Heart right ventricle (tissue), 16 donors: ENCODE measurements at regions of chr10 and their contacts with region 1.

Region 1: GRCh38 chr10:94362360-94363250 is at the start of gene NOC3L:
- DNase-seq: peak; percentile 93 to 96
- ATAC-seq: peak; percentile 99 to 100 (median 100)
- H3K4me3 ChIP-seq: peak within 1 kb of the TSS; percentile 39 to 84 (median 74)
- H3K27ac ChIP-seq: peak within 1 kb of the TSS in 9 of 10 donors; percentile 48 to 84 (median 72)
- H3K4me1 ChIP-seq: peaks cover 6 to 27% (median 15%) of the 10 kb centered on the region in 9 donors
- H3K27me3 ChIP-seq: peaks cover 0 to 4% (median 0%) of the 10 kb centered on the region in 7 donors
- CTCF ChIP-seq: peak; percentile 74 to 97 (median 92)
- total RNA-seq, gene NOC3L: 7.1 to 9.3 (median 8.0) TPM

Region 2: DNA sequence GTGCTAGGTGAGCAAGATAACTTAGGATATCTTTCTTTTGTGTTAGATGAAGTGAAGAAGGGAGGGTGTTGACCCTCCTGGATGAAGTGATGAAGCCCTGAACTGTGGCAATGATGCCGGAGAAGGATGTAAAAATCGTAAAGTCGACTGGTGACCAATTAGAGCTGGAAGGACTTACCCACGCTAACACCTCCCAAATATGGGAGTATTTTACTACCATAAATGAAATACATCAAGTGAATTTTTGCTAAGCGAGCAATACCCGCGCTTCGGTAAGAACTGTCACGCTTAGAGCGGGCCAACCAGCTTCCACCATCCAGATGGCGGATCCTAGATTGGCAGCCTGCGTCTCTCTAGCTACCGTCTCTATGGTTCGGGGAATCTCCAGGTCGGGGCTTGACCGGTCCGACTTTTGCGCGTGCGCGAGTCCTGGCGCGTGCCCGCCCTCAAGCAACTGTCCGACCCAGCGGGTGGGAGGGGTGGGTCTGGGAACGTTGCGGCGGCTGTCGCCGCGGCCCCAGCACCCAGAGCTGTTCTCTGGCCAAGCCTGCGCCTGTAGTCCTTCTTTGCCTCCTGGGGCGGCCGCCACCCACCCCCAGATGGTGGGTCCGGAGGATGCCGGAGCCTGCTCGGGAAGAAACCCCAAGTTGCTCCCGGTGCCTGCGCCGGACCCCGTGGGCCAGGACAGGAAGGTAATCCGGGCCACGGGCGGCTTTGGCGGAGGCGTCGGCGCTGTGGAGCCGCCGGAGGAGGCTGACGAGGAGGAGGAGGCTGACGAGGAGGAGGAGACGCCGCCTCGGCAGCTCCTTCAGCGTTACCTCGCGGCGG is 39.6 kb after region 1 on chr10 and contains the start of gene TBC1D12:
- intact Hi-C with region 1: loop called in 6 of 10 experiments (anchors 1 to 5 kb)
- DNase-seq: peak; percentile 96 to 97
- ATAC-seq: peak; percentile 97 to 99 (median 99)
- H3K4me3 ChIP-seq: peak within 1 kb of the TSS; percentile 53 to 98 (median 89)
- H3K27ac ChIP-seq: peak within 1 kb of the TSS; percentile 83 to 97 (median 94)
- H3K4me1 ChIP-seq: peaks cover 4 to 37% (median 20%) of the 10 kb centered on the region in 9 donors
- H3K27me3 ChIP-seq: peaks cover 0 to 69% (median 0%) of the 10 kb centered on the region in 7 donors
- CTCF ChIP-seq: no peak
- total RNA-seq, gene TBC1D12: 4.1 to 7.2 (median 5.0) TPM